ENCODE measurements at regions of chr5 and their contacts with region 1.

Region 1: DNA sequence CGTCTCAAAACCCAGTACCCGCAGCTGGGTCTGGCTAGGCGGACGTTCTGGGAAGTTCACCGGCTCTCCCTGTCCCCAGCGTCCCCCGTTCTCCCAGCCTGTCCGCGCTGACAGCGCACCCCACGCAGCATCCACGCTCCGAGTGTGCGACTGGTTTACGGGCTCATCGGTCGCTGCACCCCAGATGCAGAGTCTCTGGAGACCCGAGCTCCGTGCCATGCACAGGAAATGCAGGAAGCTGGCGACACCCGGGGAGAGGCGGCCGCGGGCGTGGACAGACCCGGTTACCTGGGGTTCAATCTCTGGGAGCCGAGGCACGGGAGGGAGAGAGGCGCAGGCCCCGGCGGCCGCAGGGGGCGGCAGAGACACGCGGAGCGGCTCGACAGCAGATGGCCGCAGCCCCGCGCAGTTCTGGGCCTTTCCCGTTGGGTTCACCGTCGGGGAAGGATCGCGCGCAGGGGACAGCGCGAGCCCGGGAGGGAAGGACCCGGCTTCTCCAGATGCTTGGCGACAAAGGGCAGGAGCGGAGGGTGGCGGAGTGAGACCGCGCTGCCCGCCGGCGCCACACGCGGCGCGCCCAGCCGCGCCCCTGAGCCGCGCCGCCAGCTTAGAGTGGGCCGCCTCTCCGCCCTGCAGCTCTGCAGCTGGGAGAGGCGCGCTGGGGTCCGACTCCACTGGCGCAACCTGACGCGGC is 558 bp downstream of the SHROOM1 start:
- DNase-seq: peak; percentile 75 to 95
- ATAC-seq: peak; percentile 94
- H3K4me3 ChIP-seq: peak overlapping the region; percentile 59
- H3K27ac ChIP-seq: peak overlapping the region; percentile 75 to 96
- H3K4me1 ChIP-seq: peaks cover 3% of the 10 kb centered on the region; the same call in 1 of the 3 replicates
- CTCF ChIP-seq: peak; percentile 69
- EP300 ChIP-seq: no peak
- POLR2A ChIP-seq: peak; percentile 37; the same call in 1 of the 2 replicates
- RAD21 ChIP-seq: peak; percentile 65 to 82; a peak in 4 of 5 replicates

Region 2: GRCh38 chr5:132456296-132457001 is 373.4 kb before region 1 on chr5:
- CTCF ChIA-PET with region 1: no interaction called
- POLR2A ChIA-PET with region 1: no interaction called
- DNase-seq: no peak
- ATAC-seq: no peak
- H3K4me3 ChIP-seq: no peak overlapping the region
- H3K27ac ChIP-seq: peak overlapping the region; percentile 5 to 66; a peak in 3 of 6 replicates
- H3K4me1 ChIP-seq: peaks cover 31% of the 10 kb centered on the region
- CTCF ChIP-seq: no peak
- EP300 ChIP-seq: no peak
- POLR2A ChIP-seq: no peak
- RAD21 ChIP-seq: no peak

Region 3: DNA sequence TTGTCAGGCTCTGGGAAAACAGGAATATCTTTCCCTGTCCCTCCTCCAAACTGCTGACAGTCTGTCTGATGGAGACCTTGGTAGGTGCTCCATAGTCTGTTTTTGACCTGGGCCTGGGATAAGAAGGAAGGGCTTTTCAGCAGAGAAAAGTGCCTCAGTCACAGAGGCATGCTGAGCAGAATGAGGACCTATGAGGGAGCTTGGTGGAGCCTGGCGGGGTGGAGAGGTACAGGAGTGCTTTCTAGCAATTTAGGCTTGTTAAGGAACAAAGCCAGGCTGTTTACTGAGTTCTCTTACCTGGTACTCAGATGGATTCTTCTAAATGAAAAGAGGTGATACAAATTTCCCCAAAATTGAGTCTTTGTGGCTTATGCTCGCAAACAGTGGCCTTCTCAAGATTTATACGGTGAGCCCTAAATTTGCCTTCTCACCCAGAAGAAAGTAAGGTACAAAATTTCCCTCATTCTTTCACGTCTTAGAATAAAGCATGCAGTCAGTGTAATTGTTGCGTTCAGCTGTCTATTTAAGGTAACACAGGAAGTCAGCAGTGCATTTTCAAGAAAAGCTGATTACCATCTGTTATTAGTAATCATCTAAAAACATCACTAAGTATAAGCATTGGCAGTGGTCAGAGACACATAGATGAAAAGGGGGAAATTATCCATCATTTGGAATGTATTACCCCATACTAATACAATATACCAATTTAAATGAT is 200.5 kb before region 1 on chr5:
- CTCF ChIA-PET with region 1: no interaction called
- POLR2A ChIA-PET with region 1: no interaction called
- DNase-seq: no peak
- ATAC-seq: no peak
- H3K4me3 ChIP-seq: no peak overlapping the region
- H3K27ac ChIP-seq: no peak overlapping the region
- H3K4me1 ChIP-seq: no peaks in the 10 kb centered on the region
- CTCF ChIP-seq: no peak
- EP300 ChIP-seq: no peak
- POLR2A ChIP-seq: no peak
- RAD21 ChIP-seq: no peak

Region 4: DNA sequence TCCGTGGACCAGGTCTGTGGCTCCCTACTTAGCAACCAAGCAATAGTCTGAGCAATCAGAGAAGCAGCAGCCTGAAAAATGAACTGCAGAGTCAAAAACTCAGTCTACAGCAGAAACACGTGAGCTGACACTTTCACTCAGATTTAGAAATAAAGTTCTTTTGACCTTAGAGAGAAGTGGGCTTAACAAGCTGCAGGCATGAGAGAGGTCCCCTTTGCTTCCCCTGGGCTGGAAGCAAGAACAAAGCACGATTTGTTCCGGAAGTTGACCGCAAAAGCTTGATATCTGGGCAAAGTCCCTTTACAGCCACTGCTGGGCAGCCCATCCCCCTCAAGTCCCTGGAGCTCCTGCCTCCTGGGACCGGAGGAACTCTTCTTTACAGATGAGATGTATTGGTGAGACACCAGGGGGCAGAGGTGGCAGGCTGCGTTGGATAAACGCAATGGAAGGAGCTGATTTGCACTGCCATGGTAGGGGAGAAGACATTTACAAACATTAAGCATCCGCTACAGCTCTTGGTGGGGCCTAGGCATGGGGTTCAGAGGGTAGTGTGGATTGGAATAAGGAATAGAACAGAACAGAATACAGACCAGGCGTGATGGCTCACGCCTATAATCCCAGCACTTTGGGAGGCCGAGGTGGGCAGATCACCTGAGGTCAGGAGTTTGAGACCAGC is 22.6 kb before region 1 on chr5:
- CTCF ChIA-PET with region 1: interaction called, 28 read pairs
- POLR2A ChIA-PET with region 1: no interaction called
- DNase-seq: peak; percentile 61 to 71
- ATAC-seq: peak; percentile 92 to 97
- H3K4me3 ChIP-seq: no peak overlapping the region
- H3K27ac ChIP-seq: peak overlapping the region; percentile 24 to 53; a peak in 4 of 6 replicates
- H3K4me1 ChIP-seq: peaks cover 5% of the 10 kb centered on the region; the same call in 1 of the 3 replicates
- CTCF ChIP-seq: peak; percentile 30; the same call in 2 of the 3 replicates
- EP300 ChIP-seq: no peak
- POLR2A ChIP-seq: no peak
- RAD21 ChIP-seq: no peak; a peak in 1 of 5 replicates

Region 5: DNA sequence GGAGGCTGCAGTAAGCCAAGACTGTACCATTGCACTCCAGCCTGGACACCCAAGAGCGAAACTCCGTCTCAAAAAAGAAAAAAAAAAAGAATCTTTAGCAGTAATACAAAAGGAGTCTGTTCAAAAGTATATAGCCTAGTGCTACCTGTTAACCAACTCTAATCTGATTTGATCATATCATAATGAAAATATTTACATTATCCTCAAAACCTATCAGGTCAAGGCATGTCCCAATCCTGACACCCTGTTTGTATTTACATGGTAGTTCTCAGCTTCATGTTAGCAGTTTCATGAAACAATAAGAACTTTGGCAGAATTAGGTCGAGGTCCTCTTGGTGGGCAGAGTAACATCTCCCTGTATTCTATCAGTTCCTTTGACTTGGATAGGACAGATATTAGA is 15.0 kb after region 1 on chr5:
- CTCF ChIA-PET with region 1: interaction called, 17 read pairs
- POLR2A ChIA-PET with region 1: no interaction called
- DNase-seq: no peak
- ATAC-seq: no peak
- H3K4me3 ChIP-seq: no peak overlapping the region
- H3K27ac ChIP-seq: no peak overlapping the region
- H3K4me1 ChIP-seq: peaks cover under 1% of the 10 kb centered on the region; the same call in 1 of the 3 replicates
- CTCF ChIP-seq: no peak
- EP300 ChIP-seq: no peak
- POLR2A ChIP-seq: no peak
- RAD21 ChIP-seq: no peak

Region 6: DNA sequence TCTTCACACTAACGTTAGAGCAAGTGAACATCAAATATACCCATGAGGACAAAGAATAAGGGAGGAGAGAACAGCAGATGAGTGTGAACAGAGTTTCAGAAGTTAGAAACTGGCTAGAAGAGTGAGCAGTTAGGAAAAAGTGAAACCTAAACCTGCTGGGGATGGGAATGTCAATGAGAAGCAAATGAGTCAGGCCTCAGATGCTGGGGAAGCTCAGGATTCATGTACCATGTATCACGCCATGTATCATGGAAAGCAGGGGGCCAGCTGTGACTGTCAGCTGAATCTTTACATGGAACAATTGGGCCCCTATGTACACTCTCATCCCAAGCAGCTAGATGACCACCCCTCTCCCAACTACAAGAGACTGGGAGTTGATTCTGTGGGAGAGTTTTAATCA is 20.2 kb after region 1 on chr5:
- CTCF ChIA-PET with region 1: interaction called, 17 read pairs
- POLR2A ChIA-PET with region 1: no interaction called
- DNase-seq: no peak
- ATAC-seq: no peak
- H3K4me3 ChIP-seq: no peak overlapping the region
- H3K27ac ChIP-seq: no peak overlapping the region
- H3K4me1 ChIP-seq: no peaks in the 10 kb centered on the region
- CTCF ChIP-seq: no peak
- EP300 ChIP-seq: no peak
- POLR2A ChIP-seq: no peak
- RAD21 ChIP-seq: no peak

Region 7: DNA sequence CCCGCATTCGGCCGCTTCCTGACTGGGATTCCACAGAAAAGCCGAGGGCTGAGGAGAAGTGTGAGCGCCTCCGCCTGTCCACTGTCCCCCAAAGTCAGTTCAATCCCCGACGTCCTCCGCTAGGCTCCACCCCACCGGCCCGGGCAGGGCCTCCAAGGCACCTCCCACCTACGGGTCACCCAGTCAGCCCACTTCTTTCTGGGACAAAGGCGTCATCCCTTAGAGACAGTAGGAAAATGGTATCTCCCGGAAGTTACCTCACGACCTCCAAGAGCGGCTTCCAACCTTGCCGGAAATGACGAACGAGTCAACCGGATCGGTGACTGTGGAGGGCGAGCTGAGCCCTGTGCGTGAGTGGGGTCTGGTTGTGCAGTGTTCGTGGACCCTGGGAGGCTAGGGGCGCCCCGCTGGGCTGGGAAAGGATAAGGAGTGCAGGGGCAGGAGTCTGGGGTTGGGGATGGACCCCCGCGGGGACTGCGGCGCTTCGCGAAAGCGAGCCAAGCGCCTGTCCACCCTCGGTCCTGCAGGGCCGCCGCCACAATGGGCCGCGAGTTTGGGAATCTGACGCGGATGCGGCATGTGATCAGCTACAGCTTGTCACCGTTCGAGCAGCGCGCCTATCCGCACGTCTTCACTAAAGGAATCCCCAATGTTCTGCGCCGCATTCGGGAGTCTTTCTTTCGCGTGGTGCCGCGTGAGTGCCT is 36.6 kb after region 1 on chr5 and contains the starts of genes GDF9 and UQCRQ:
- CTCF ChIA-PET with region 1: interaction called, 69 read pairs
- POLR2A ChIA-PET with region 1: interaction called, 5 read pairs
- DNase-seq: peak; percentile 98 to 100
- ATAC-seq: peak; percentile 98 to 99
- H3K4me3 ChIP-seq: peak within 1 kb of the TSS; percentile 73
- H3K27ac ChIP-seq: peak within 1 kb of the TSS; percentile 92 to 95
- H3K4me1 ChIP-seq: peaks cover 12% of the 10 kb centered on the region; the same call in 1 of the 3 replicates
- CTCF ChIP-seq: peak; percentile 39
- EP300 ChIP-seq: no peak
- POLR2A ChIP-seq: peak; percentile 94
- RAD21 ChIP-seq: peak; percentile 48 to 56
- polyA plus RNA-seq, gene GDF9: 0.83 and 0.85 TPM in 2 replicates
- polyA plus RNA-seq, gene UQCRQ: 497 and 500 TPM in 2 replicates

Region 8: DNA sequence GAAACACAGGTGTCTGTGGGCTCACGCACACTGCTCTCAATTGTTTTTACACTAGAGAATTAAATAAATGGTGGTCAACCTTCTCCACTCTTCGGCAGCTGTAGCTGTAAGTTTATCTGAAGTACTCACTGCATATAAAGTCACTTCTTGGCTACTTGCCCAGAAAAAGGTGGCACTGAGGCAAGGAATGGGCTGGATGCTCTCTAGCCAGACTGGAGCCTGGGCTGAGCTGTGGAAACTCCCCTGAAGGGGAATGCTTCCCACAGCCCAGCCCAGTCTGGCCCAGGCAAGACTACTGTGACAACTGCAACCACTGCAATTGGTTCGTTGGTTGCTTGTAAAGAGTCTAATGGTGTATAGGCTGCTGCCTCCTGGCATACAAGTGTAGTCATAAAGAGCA is 48.0 kb after region 1 on chr5:
- CTCF ChIA-PET with region 1: interaction called, 48 read pairs
- POLR2A ChIA-PET with region 1: no interaction called
- DNase-seq: no peak
- ATAC-seq: no peak; a peak in 1 of 6 replicates
- H3K4me3 ChIP-seq: no peak overlapping the region
- H3K27ac ChIP-seq: no peak overlapping the region
- H3K4me1 ChIP-seq: peaks cover 7% of the 10 kb centered on the region; the same call in 1 of the 3 replicates
- CTCF ChIP-seq: no peak
- EP300 ChIP-seq: no peak
- POLR2A ChIP-seq: no peak
- RAD21 ChIP-seq: no peak

Region 9: GRCh38 chr5:132883261-132883834 is 53.5 kb after region 1 on chr5:
- CTCF ChIA-PET with region 1: interaction called, 48 read pairs
- POLR2A ChIA-PET with region 1: no interaction called
- DNase-seq: peak; percentile 60 to 80
- ATAC-seq: peak; percentile 97 to 99
- H3K4me3 ChIP-seq: no peak overlapping the region
- H3K27ac ChIP-seq: no peak overlapping the region
- H3K4me1 ChIP-seq: no peaks in the 10 kb centered on the region
- CTCF ChIP-seq: peak; percentile 69
- EP300 ChIP-seq: no peak
- POLR2A ChIP-seq: no peak
- RAD21 ChIP-seq: peak; percentile 54; a peak in 4 of 5 replicates